ENCODE measurements at regions of chr4 and their contacts with region 1.

Region 1: DNA sequence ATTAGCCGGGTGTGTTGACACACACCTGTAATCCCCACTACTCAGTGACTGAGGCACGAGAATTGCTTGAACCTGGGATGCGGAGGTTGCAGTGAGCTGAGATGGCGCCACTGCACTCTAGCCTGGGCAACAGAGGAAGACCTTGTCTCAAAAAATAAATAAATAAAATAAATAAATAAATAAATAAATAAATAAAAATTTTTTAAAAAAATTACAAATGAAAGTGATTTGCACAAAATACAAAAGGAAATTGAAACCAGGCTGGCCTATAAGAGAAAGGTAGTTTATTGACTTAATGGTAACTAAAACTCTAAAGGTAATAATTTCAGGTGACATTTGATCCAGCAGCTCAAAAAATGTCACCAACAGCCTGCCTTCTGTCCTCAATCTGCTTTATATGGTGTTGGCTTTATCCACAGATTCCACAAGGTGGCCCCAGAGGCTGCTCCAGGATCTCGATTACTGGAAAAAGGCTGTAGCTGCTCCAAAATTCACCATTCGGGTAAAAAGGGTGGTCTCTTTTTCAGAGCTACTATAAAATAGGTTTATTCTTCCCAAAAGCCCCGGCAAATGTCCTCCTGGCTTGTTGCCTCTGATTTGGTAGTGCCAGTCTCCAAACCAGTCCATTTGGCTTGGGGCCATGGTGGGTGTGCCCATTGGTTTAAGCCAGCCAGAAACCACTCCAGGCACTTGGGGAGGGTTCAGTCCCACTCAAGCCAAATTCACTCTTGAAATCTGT is 61.4 kb upstream of the TRIM2 start:
- DNase-seq: no peak
- ATAC-seq: peak; percentile 74
- H3K4me3 ChIP-seq: no peak overlapping the region
- H3K27ac ChIP-seq: no peak overlapping the region
- H3K4me1 ChIP-seq: no peaks in the 10 kb centered on the region
- H3K27me3 ChIP-seq: peaks cover 2 to 4% of the 10 kb centered on the region in 2 experiments; a peak in 2 of 4 replicates
- CTCF ChIP-seq: peak; percentile 60 to 79 (median 63)
- EP300 ChIP-seq: no peak
- POLR2A ChIP-seq: no peak
- RAD21 ChIP-seq: peak; percentile 81

Region 2: GRCh38 chr4:152927737-152928136 is 215.1 kb before region 1 on chr4:
- CTCF ChIA-PET with region 1: no interaction called
- POLR2A ChIA-PET with region 1: no interaction called
- RAD21 ChIA-PET with region 1: no interaction called
- SMC1A ChIA-PET with region 1: no interaction called
- in situ Hi-C with region 1: no loop called
- intact Hi-C with region 1: no loop called
- DNase-seq: no peak
- ATAC-seq: no peak
- H3K4me3 ChIP-seq: no peak overlapping the region
- H3K27ac ChIP-seq: no peak overlapping the region
- H3K4me1 ChIP-seq: peaks cover 6% of the 10 kb centered on the region; the same call in 1 of the 2 replicates
- H3K27me3 ChIP-seq: no peaks in the 10 kb centered on the region
- CTCF ChIP-seq: no peak
- EP300 ChIP-seq: no peak
- POLR2A ChIP-seq: no peak
- RAD21 ChIP-seq: no peak

Region 3: DNA sequence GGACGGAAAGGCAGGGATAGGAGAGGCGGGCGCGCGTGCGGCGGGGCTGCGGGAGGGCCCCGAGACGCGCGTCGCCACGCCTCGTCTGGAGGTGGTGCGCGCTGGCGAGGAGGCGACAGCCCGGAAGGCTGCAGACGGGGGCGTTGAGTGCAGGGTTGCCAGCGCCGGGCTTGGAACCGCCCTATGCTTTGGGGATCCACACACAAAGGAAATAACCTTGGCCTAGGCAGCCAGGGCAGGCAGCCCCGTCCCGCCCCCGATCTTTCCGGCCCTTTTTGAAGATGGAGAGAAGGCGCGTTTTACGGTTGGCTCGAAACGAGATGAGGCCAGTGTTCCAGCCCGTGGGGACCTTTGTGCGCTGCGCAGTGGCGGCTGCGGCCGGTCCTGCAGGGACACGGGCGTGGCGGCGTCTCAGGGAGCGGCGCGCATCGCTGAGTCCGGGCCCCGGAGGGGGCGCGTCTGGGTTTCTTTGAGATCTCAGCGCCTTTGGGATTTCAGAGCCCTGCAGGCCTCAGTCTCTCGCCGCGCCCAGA is 10.5 kb after region 1 on chr4:
- CTCF ChIA-PET with region 1: interaction called, 13 read pairs
- POLR2A ChIA-PET with region 1: no interaction called
- RAD21 ChIA-PET with region 1: interaction called, 6 read pairs
- SMC1A ChIA-PET with region 1: interaction called, 7 read pairs
- in situ Hi-C with region 1: no loop called
- intact Hi-C with region 1: no loop called
- DNase-seq: no peak
- ATAC-seq: peak; percentile 82
- H3K4me3 ChIP-seq: peak overlapping the region; percentile 62
- H3K27ac ChIP-seq: no peak overlapping the region
- H3K4me1 ChIP-seq: peaks cover 33% of the 10 kb centered on the region
- H3K27me3 ChIP-seq: peaks cover 0 to 5% of the 10 kb centered on the region in 2 experiments; a peak in 3 of 4 replicates
- CTCF ChIP-seq: no peak
- EP300 ChIP-seq: no peak
- POLR2A ChIP-seq: peak; percentile 29; the same call in 1 of the 2 replicates
- RAD21 ChIP-seq: no peak

Region 4: GRCh38 chr4:153318696-153319320 is 175.9 kb after region 1 on chr4:
- CTCF ChIA-PET with region 1: interaction called, 7 read pairs
- POLR2A ChIA-PET with region 1: no interaction called
- RAD21 ChIA-PET with region 1: interaction called, 3 read pairs
- SMC1A ChIA-PET with region 1: interaction called, 7 read pairs
- in situ Hi-C with region 1: loop called (anchors 5 kb)
- intact Hi-C with region 1: loop called (anchors 1 kb)
- DNase-seq: no peak
- ATAC-seq: peak; percentile 88
- H3K4me3 ChIP-seq: no peak overlapping the region
- H3K27ac ChIP-seq: no peak overlapping the region
- H3K4me1 ChIP-seq: no peaks in the 10 kb centered on the region
- H3K27me3 ChIP-seq: no peaks in the 10 kb centered on the region
- CTCF ChIP-seq: peak; percentile 62 to 68 (median 66)
- EP300 ChIP-seq: no peak
- POLR2A ChIP-seq: no peak
- RAD21 ChIP-seq: peak; percentile 78

Region 5: GRCh38 chr4:153649572-153649991 is 506.7 kb after region 1 on chr4:
- CTCF ChIA-PET with region 1: interaction called, 14 read pairs
- POLR2A ChIA-PET with region 1: no interaction called
- RAD21 ChIA-PET with region 1: interaction called, 7 read pairs
- SMC1A ChIA-PET with region 1: interaction called, 5 read pairs
- in situ Hi-C with region 1: loop called (anchors 10 kb)
- intact Hi-C with region 1: loop called (anchors 2 kb)
- DNase-seq: no peak
- ATAC-seq: peak; percentile 75
- H3K4me3 ChIP-seq: no peak overlapping the region
- H3K27ac ChIP-seq: no peak overlapping the region
- H3K4me1 ChIP-seq: no peaks in the 10 kb centered on the region
- H3K27me3 ChIP-seq: no peaks in the 10 kb centered on the region
- CTCF ChIP-seq: peak; percentile 39 to 50 (median 48); a peak in 5 of 6 replicates
- EP300 ChIP-seq: no peak
- POLR2A ChIP-seq: no peak
- RAD21 ChIP-seq: peak; percentile 62